Activated T-helper 1 cell treated with anti-CD3 and anti-CD28 coated beads, Interleukin-12 subunit alpha, Interleukin-12 subunit beta, Interleukin-2, Interleukin-4 antibody, amounts not matched to agents 30 ng/mL and 10 ng/mL and 1 ng/mL, durations not matched to agents 14 hours and 24 hours and 36 hours (primary cell): ENCODE measurements at regions of chr13 and their contacts with region 1.

Region 1: GRCh38 chr13:20773194-20774080 is at the start of gene EEF1AKMT1:
- DNase-seq: peak; percentile 94
- H3K4me3 Mint-ChIP-seq: peak within 1 kb of the TSS; percentile 92
- H3K27ac Mint-ChIP-seq: peak within 1 kb of the TSS; percentile 100
- H3K4me1 Mint-ChIP-seq: peaks cover 29% of the 10 kb centered on the region
- H3K27me3 Mint-ChIP-seq: no peaks in the 10 kb centered on the region
- total RNA-seq, gene EEF1AKMT1: 8.7 and 12.9 TPM in 2 replicates

Region 2: GRCh38 chr13:20418953-20419352 is 354.5 kb before region 1 on chr13:
- intact Hi-C with region 1: loop called (anchors 1 kb)
- DNase-seq: no peak
- H3K4me3 Mint-ChIP-seq: no peak overlapping the region
- H3K27ac Mint-ChIP-seq: peak overlapping the region; percentile 42
- H3K4me1 Mint-ChIP-seq: peaks cover 57% of the 10 kb centered on the region
- H3K27me3 Mint-ChIP-seq: peaks cover 2% of the 10 kb centered on the region

Region 3: DNA sequence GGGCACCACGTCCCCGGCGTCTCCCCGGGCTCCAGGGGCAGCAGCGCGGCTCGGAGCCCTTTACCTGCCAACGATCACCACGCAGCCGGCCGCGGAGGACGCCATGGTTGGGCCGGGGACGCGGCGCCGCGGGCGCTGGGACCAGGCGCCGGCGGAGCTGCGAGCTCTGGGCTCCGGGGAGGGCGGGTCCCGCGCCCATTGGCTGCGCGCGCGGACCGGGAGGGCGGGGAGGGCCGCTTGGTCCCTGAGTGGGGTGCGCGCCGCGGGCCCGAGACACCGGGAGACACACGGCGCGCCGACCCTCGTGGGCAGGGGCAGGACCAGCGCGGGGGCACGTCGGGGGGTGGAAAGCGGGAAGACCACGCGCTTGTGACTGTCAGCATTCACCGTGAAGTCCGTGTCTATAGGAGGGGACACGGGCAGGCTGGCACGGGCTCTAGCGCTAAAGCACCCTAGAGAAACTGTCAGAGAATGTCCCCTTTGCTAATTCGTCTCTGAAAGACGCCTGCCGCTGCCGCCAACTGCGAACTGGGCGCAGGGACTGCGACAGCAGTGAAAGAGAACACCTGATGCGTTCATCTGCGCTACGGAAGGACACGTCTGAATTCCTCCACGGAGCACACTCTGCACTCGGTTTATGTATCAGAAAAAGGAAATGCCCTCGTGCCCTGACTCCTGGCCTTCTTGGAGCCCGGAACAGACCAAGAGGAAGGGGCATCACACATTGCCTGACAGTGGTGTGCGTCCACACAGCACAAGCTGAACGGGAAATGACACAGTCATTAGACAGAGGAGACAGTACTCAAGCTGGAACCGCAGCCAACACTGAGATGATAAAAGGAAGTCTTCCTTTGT is 247.5 kb before region 1 on chr13 and contains the start of gene CRYL1:
- intact Hi-C with region 1: loop called (anchors 1 kb)
- DNase-seq: peak; percentile 67
- H3K4me3 Mint-ChIP-seq: peak within 1 kb of the TSS; percentile 87
- H3K27ac Mint-ChIP-seq: peak within 1 kb of the TSS; percentile 73
- H3K4me1 Mint-ChIP-seq: peaks cover 38% of the 10 kb centered on the region
- H3K27me3 Mint-ChIP-seq: peaks cover 1% of the 10 kb centered on the region
- total RNA-seq, gene CRYL1: 3.9 and 5.6 TPM in 2 replicates

Region 4: DNA sequence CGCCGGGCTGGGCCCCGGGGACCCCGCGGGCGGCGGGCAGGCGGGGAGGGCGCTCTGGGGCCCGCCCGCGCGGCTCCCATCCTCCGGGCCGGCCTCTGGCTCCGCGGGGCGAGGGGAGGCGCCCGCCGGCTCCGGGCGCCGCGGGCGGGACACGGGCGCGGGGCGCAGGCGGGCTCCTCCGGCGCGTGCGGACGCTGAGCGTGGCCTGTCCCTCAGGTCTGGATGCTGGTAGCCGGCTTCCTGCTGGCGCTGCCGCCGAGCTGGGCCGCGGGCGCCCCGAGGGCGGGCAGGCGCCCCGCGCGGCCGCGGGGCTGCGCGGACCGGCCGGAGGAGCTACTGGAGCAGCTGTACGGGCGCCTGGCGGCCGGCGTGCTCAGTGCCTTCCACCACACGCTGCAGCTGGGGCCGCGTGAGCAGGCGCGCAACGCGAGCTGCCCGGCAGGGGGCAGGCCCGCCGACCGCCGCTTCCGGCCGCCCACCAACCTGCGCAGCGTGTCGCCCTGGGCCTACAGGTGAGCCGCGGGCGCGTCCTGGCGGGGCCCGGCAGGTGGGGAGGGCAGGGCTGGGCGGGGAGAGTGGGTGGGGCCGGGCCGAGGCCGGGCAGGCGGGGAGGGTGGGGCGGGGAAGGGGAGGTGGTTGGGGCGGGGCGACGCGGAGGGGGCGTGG is 69.5 kb before region 1 on chr13:
- intact Hi-C with region 1: loop called (anchors 1 kb)
- DNase-seq: peak; percentile 65
- H3K4me3 Mint-ChIP-seq: no peak overlapping the region
- H3K27ac Mint-ChIP-seq: no peak overlapping the region
- H3K4me1 Mint-ChIP-seq: peaks cover 5% of the 10 kb centered on the region
- H3K27me3 Mint-ChIP-seq: peaks cover 40% of the 10 kb centered on the region

Region 5: GRCh38 chr13:20902438-20903163 is 129.2 kb after region 1 on chr13 and contains the start of gene XPO4:
- intact Hi-C with region 1: loop called (anchors 1 kb)
- DNase-seq: peak; percentile 80
- H3K4me3 Mint-ChIP-seq: peak within 1 kb of the TSS; percentile 99
- H3K27ac Mint-ChIP-seq: peak within 1 kb of the TSS; percentile 94
- H3K4me1 Mint-ChIP-seq: peaks cover 32% of the 10 kb centered on the region
- H3K27me3 Mint-ChIP-seq: peaks cover 6% of the 10 kb centered on the region
- total RNA-seq, gene XPO4: 33.5 and 34.1 TPM in 2 replicates

Region 6: DNA sequence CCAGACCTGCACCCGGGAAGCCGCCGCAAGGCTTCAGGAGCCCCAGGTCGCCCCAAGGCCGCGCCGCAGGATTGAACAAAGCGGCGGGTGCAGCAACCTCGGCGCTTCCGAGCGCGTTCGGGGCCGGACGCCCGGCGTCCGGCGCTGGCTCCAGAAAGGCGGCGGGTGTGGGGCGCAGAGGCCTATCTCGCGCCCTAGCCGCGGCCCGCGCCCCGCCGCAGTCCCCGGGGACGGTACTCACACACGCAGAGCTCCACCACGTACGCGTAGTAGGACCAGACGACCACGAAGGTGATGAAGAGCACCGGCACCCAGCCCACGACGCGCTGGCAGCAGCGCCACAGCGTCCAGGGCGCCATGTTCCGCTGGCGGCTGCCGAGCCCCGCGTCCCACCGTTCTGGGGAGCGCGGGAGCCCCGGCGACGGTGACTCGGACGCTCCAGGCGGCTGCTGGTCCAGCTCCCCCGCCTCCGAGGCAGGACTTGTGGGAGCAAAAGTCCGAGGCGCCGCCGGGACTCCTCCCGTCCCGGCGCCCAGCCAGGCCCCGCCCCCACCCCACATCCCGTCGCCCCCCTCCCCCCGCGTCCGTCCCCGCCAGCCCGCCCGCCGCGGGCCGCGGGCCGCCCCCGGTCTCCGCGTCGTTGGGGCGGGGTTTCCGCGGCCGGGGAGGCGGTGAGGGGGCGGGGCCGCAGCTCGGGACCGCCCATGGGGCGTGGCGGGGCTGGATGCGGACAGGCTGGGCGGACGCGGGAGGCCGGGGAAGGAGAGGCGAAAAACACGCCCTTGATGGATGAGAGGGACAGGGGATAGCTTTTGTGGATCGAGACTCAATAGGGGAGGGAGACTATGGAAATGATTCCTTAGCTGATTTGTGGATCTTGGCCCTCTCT is 685.6 kb after region 1 on chr13 and contains the start of gene ZDHHC20:
- intact Hi-C with region 1: loop called (anchors 1 kb)
- DNase-seq: peak; percentile 86
- H3K4me3 Mint-ChIP-seq: peak within 1 kb of the TSS; percentile 94
- H3K27ac Mint-ChIP-seq: peak within 1 kb of the TSS; percentile 94
- H3K4me1 Mint-ChIP-seq: peaks cover 32% of the 10 kb centered on the region
- H3K27me3 Mint-ChIP-seq: no peaks in the 10 kb centered on the region
- total RNA-seq, gene ZDHHC20: 61.2 and 66.4 TPM in 2 replicates